T-cell (primary cell): ENCODE measurements at regions of chr10 and their contacts with region 1.

Region 1: GRCh38 chr10:93068411-93069244 is 5.1 kb upstream of the CYP26A1 start:
- DNase-seq: no peak
- ATAC-seq: no peak
- H3K4me3 ChIP-seq: no peak overlapping the region
- H3K4me3 Mint-ChIP-seq: no peak overlapping the region
- H3K27ac ChIP-seq: no peak overlapping the region
- H3K27ac Mint-ChIP-seq: no peak overlapping the region
- H3K4me1 ChIP-seq: peaks cover 0 to 25% of the 10 kb centered on the region in 2 experiments
- H3K4me1 Mint-ChIP-seq: peaks cover 33 to 43% (median 41%) of the 10 kb centered on the region in 3 donors
- H3K27me3 ChIP-seq: peaks cover 32 to 82% of the 10 kb centered on the region in 2 experiments
- H3K27me3 Mint-ChIP-seq: peaks cover 58 to 84% of the 10 kb centered on the region in 2 donors

Region 2: GRCh38 chr10:92290837-92291615 is 777.6 kb before region 1 on chr10 and contains the starts of genes CPEB3 and MARCHF5:
- CTCF ChIA-PET with region 1: no interaction called
- POLR2A ChIA-PET with region 1: no interaction called
- DNase-seq: peak; percentile 74 to 94 (median 87)
- ATAC-seq: peak; percentile 98 to 99 (median 98)
- H3K4me3 ChIP-seq: peak within 1 kb of the TSS; percentile 93 to 96
- H3K4me3 Mint-ChIP-seq: peak within 1 kb of the TSS; percentile 93 to 94 (median 94)
- H3K27ac ChIP-seq: peak within 1 kb of the TSS; percentile 69
- H3K27ac Mint-ChIP-seq: peak within 1 kb of the TSS; percentile 61 to 80
- H3K4me1 ChIP-seq: peaks cover 6 to 31% of the 10 kb centered on the region in 2 experiments
- H3K4me1 Mint-ChIP-seq: peaks cover 28 to 32% (median 31%) of the 10 kb centered on the region in 3 donors
- H3K27me3 ChIP-seq: no peaks in the 10 kb centered on the region
- H3K27me3 Mint-ChIP-seq: no peaks in the 10 kb centered on the region
- total RNA-seq, gene CPEB3: 2.7 to 4.1 (median 3.1) TPM
- total RNA-seq, gene MARCHF5: 22.8 to 37.9 (median 32.7) TPM

Region 3: GRCh38 chr10:93058139-93058538 is 10.5 kb before region 1 on chr10:
- CTCF ChIA-PET with region 1: no interaction called
- POLR2A ChIA-PET with region 1: no interaction called
- DNase-seq: no peak
- ATAC-seq: no peak
- H3K4me3 ChIP-seq: no peak overlapping the region
- H3K4me3 Mint-ChIP-seq: no peak overlapping the region
- H3K27ac ChIP-seq: no peak overlapping the region
- H3K27ac Mint-ChIP-seq: no peak overlapping the region
- H3K4me1 ChIP-seq: peaks cover 0 to 20% of the 10 kb centered on the region in 2 experiments
- H3K4me1 Mint-ChIP-seq: peaks cover 20 to 24% (median 20%) of the 10 kb centered on the region in 3 donors
- H3K27me3 ChIP-seq: peaks cover 6 to 24% of the 10 kb centered on the region in 2 experiments
- H3K27me3 Mint-ChIP-seq: peaks cover 4 to 22% of the 10 kb centered on the region in 2 donors

Region 4: GRCh38 chr10:93080350-93081046 is 11.9 kb after region 1 on chr10:
- CTCF ChIA-PET with region 1: interaction called in 1 of 2 experiments, 12 read pairs
- POLR2A ChIA-PET with region 1: interaction called in 1 of 2 experiments, 3 read pairs
- DNase-seq: peak in 28 of 35 experiments; percentile 14 to 64 (median 34)
- ATAC-seq: peak; percentile 52 to 67 (median 64)
- H3K4me3 ChIP-seq: no peak overlapping the region
- H3K4me3 Mint-ChIP-seq: peak overlapping the region in 1 of 3 donors; percentile 17
- H3K27ac ChIP-seq: no peak overlapping the region
- H3K27ac Mint-ChIP-seq: no peak overlapping the region
- H3K4me1 ChIP-seq: peaks cover 0 to 4% of the 10 kb centered on the region in 2 experiments
- H3K4me1 Mint-ChIP-seq: peaks cover 7 to 8% (median 8%) of the 10 kb centered on the region in 3 donors
- H3K27me3 ChIP-seq: peaks cover 14 to 34% of the 10 kb centered on the region in 2 experiments
- H3K27me3 Mint-ChIP-seq: peaks cover 42 to 43% of the 10 kb centered on the region in 2 donors